Ovary (tissue), 10 donors: ENCODE measurements at regions of chr6 and their contacts with region 1.

Region 1: GRCh38 chr6:67009818-67010217 is 1302.8 kb upstream of the EYS start:
- DNase-seq: no peak
- H3K4me3 ChIP-seq: no peak overlapping the region
- H3K27ac ChIP-seq: no peak overlapping the region
- H3K4me1 ChIP-seq: no peaks in the 10 kb centered on the region
- H3K27me3 ChIP-seq: no peaks in the 10 kb centered on the region
- CTCF ChIP-seq: no peak
- EP300 ChIP-seq: no peak
- POLR2A ChIP-seq: no peak

Region 2: DNA sequence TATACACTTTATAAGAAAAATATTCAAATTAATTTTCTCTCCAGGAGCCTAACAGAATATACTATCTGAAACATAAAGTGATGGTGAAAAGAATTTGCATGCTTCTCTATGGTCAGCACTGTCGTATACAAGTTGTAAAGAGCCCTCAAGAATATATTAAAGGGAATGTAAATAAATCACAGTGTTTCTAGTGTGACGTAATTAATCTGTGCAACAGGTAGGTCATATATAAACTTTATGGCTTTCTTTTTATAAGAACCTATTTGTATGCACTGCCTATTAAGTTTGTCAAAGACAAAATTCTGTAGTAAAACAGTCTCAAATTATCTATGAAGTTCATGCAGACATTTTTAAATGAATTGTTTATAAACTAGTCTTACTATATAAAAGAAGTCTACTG is 954.9 kb before region 1 on chr6:
- intact Hi-C with region 1: no loop called
- DNase-seq: no peak
- H3K4me3 ChIP-seq: no peak overlapping the region
- H3K27ac ChIP-seq: no peak overlapping the region
- H3K4me1 ChIP-seq: no peaks in the 10 kb centered on the region
- H3K27me3 ChIP-seq: no peaks in the 10 kb centered on the region
- CTCF ChIP-seq: no peak
- EP300 ChIP-seq: no peak
- POLR2A ChIP-seq: no peak

Region 3: GRCh38 chr6:67411036-67411435 is 401.2 kb after region 1 on chr6:
- intact Hi-C with region 1: loop called in 1 of 4 experiments (anchors 10 kb)
- DNase-seq: no peak
- H3K4me3 ChIP-seq: no peak overlapping the region
- H3K27ac ChIP-seq: no peak overlapping the region
- H3K4me1 ChIP-seq: no peaks in the 10 kb centered on the region
- H3K27me3 ChIP-seq: no peaks in the 10 kb centered on the region
- CTCF ChIP-seq: no peak
- EP300 ChIP-seq: no peak
- POLR2A ChIP-seq: no peak